IMR-90 (cell line): ENCODE measurements at regions of chr1 and their contacts with region 1.

Region 1: GRCh38 chr1:37983546-37983945 is 6.3 kb downstream of the SF3A3 start:
- DNase-seq: no peak
- ATAC-seq: no peak
- H3K4me3 ChIP-seq: no peak overlapping the region
- H3K27ac ChIP-seq: no peak overlapping the region
- H3K4me1 ChIP-seq: no peaks in the 10 kb centered on the region
- H3K27me3 ChIP-seq: no peaks in the 10 kb centered on the region
- CTCF ChIP-seq: no peak
- POLR2A ChIP-seq: no peak
- RAD21 ChIP-seq: no peak

Region 2: DNA sequence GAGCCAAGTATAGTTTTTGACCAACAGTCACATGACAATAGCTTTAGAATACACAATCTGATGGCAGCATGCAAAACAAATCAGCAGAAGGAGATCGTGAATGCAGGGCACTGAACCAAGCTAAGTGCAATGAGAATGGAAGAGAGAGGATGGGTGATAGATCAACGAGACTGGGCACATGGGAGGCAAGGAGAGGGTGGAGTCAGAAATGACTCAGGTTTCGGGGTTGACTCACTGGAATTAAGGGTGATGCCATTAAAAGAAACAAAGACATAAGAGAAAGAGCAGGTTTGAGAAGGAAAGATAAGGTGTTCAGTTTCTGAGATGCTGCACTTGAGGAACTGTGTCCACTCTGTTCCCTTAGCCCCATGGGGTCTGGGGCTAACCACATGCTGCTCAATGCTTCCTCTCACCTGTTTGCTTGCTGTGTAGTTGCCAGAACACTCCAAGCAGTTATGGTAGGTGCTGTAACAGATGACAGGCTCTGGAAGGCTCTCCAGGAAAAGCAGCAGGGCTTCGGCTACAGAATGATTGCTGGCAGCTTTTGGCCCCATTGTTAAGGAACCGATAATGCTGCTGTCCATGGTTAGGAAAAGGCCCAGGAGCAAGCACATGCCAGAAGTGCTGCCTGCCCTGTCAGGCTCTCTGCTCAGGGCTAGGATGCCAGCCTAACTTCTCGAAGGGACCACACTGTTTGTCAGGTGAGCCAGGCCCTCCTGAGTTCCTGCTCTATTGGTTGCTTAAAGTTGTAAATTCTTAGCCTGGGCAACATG is 118.0 kb before region 1 on chr1:
- CTCF ChIA-PET with region 1: no interaction called
- POLR2A ChIA-PET with region 1: no interaction called
- dilution Hi-C with region 1: no loop called
- in situ Hi-C with region 1: loop called (anchors 5 kb)
- intact Hi-C with region 1: no loop called
- DNase-seq: peak; percentile 34
- ATAC-seq: no peak; the same call in 1 of the 2 replicates
- H3K4me3 ChIP-seq: no peak overlapping the region
- H3K27ac ChIP-seq: no peak overlapping the region
- H3K4me1 ChIP-seq: 0 out of 2 replicates have a peak, but pooled peaks cover 2% of the 10 kb centered on the region
- H3K27me3 ChIP-seq: no peaks in the 10 kb centered on the region
- CTCF ChIP-seq: no peak
- POLR2A ChIP-seq: no peak
- RAD21 ChIP-seq: no peak

Region 3: DNA sequence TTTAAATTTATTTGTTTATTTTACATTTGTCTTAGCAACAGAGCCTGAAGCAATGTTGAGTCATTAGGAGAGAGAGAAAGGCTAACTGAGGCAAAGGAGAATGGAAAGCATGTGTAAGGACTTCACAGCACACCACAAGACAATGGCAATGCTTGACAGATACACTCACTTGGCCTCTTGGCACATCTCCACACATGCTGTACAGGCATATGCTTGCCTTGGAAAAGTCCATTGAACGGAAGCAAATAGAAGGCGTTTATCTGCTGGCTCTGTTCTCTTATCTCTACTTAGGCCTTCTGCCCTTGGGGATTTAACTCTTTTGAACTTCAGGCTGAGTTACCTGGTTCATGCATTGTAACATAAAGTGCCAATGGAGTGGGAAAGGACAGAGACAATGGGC is 325.2 kb after region 1 on chr1:
- CTCF ChIA-PET with region 1: no interaction called
- POLR2A ChIA-PET with region 1: no interaction called
- dilution Hi-C with region 1: no loop called
- in situ Hi-C with region 1: no loop called
- intact Hi-C with region 1: no loop called
- DNase-seq: no peak
- ATAC-seq: no peak
- H3K4me3 ChIP-seq: no peak overlapping the region
- H3K27ac ChIP-seq: no peak overlapping the region
- H3K4me1 ChIP-seq: no peaks in the 10 kb centered on the region
- H3K27me3 ChIP-seq: no peaks in the 10 kb centered on the region
- CTCF ChIP-seq: no peak
- POLR2A ChIP-seq: no peak
- RAD21 ChIP-seq: no peak